GM12878 (cell line): ENCODE measurements at regions of chr20 and their contacts with region 1.

Region 1: GRCh38 chr20:53578492-53579222 is 15.0 kb downstream of the ZNF217 start:
- DNase-seq: peak; percentile 76
- ATAC-seq: peak; percentile 61
- H3K4me3 ChIP-seq: peak overlapping the region; percentile 79
- H3K27ac ChIP-seq: peak overlapping the region; percentile 69
- H3K4me1 ChIP-seq: peaks cover 9% of the 10 kb centered on the region
- H3K27me3 ChIP-seq: no peaks in the 10 kb centered on the region
- CTCF ChIP-seq: peak; percentile 65 to 82 (median 79)
- EP300 ChIP-seq: no peak
- POLR2A ChIP-seq: no peak
- RAD21 ChIP-seq: peak; percentile 91

Region 2: GRCh38 chr20:53623454-53624211 is 45.0 kb after region 1 on chr20:
- CTCF ChIA-PET with region 1: interaction called, 6 read pairs
- POLR2A ChIA-PET with region 1: no interaction called
- RAD21 ChIA-PET with region 1: interaction called, 7 read pairs
- SMC1A ChIA-PET with region 1: interaction called, 10 read pairs
- in situ Hi-C with region 1: no loop called
- intact Hi-C with region 1: no loop called
- DNase-seq: peak; percentile 60
- ATAC-seq: peak; percentile 81
- H3K4me3 ChIP-seq: peak overlapping the region; percentile 54
- H3K27ac ChIP-seq: peak overlapping the region; percentile 99
- H3K4me1 ChIP-seq: peaks cover 38% of the 10 kb centered on the region
- H3K27me3 ChIP-seq: no peaks in the 10 kb centered on the region
- CTCF ChIP-seq: 0 out of 6 replicates have a peak, but pooled peaks of 1 of the 3 experiments have one; percentile 8
- EP300 ChIP-seq: no peak
- POLR2A ChIP-seq: peak; percentile 61
- RAD21 ChIP-seq: 0 out of 2 replicates have a peak, but pooled peaks have one; percentile 10

Region 3: DNA sequence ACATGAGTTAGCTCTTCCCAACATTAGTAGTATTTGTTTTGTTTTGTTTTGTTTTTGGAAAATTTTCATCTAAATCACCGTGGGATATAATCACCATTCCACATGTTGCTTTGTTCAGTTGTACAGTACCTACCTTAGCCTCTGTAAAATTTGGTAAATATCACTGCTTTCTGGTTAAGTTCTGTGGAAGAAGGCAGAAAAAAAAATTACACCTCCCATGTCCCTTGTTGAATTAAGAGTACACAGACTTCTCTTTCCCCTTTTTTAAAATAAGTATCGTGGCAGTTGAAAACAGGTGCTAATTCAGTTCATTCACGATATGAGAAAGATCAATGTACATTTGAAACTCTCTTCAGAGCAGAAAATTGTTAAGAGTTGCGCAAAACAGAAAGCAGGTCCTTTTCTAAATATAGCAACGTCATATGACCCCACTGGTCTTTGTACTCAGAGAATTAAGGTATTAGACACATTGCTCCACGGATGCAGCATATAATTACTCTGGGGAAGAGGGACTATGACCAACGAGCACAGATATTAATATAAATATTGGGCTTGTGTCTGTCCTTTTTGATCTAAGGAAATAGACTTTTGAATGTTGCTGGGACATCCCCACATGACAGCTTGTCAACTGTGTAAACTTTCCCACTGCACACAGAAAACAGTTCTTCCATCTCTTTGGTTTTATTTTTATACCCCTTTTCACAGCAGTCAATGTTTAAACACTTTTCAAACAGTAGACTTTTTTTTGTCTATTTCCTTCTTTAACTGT is 73.6 kb after region 1 on chr20:
- CTCF ChIA-PET with region 1: no interaction called
- POLR2A ChIA-PET with region 1: interaction called, 3 read pairs
- RAD21 ChIA-PET with region 1: interaction called, 6 read pairs
- SMC1A ChIA-PET with region 1: interaction called, 8 read pairs
- in situ Hi-C with region 1: no loop called
- intact Hi-C with region 1: loop called (anchors 2 kb)
- DNase-seq: peak; percentile 93
- ATAC-seq: peak; percentile 76
- H3K4me3 ChIP-seq: peak overlapping the region; percentile 30; the same call in 1 of the 2 replicates
- H3K27ac ChIP-seq: peak overlapping the region; percentile 99
- H3K4me1 ChIP-seq: peaks cover 39% of the 10 kb centered on the region
- H3K27me3 ChIP-seq: no peaks in the 10 kb centered on the region
- CTCF ChIP-seq: no peak
- EP300 ChIP-seq: peak; percentile 68 to 72; a peak in 2 of 4 replicates
- POLR2A ChIP-seq: no peak
- RAD21 ChIP-seq: peak; percentile 17; the same call in 1 of the 2 replicates

Region 4: DNA sequence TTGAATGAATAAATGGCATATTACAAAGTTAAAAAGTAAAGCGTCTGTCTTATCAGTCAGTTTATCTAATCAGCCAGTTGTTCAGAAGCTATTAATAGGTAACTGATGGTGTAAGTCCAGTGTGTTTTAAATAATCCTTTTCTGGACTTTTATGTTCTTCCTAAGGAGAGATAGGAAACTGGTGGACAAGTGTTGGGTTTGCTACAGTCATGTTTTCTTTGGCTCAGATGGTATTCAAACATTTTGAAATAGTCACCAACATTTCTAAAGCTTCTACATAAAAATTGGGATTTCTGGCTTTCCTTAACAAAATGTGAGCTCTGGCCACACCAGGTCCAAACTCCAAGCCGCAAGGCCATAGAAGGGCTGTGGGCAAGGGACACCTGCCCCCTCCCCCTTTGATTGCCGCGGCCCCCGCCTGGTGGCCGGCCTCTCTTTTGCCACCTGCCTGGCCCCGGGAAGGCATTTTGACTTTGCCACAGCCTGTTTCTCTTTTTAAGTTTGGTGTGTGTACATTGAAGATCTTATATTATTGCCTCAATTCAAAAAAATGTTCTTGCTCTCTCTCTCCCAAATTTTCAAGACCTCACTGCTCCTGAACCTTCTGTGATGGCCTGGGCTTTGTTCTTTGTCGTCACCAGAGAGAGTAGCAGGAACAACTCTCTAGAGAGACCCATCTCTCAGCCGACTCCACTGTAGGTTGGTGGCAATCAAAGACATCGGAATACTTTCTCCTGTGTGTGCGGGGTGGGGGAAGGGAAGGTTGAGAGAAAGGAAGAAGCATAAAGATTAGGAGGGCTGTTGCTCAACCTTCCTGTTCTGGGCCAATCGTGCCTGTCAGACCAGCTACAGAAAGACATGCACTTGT is 99.0 kb after region 1 on chr20:
- CTCF ChIA-PET with region 1: no interaction called
- POLR2A ChIA-PET with region 1: no interaction called
- RAD21 ChIA-PET with region 1: no interaction called
- SMC1A ChIA-PET with region 1: no interaction called
- in situ Hi-C with region 1: no loop called
- intact Hi-C with region 1: no loop called
- DNase-seq: no peak
- ATAC-seq: no peak
- H3K4me3 ChIP-seq: no peak overlapping the region
- H3K27ac ChIP-seq: no peak overlapping the region
- H3K4me1 ChIP-seq: peaks cover 8% of the 10 kb centered on the region; the same call in 1 of the 2 replicates
- H3K27me3 ChIP-seq: no peaks in the 10 kb centered on the region
- CTCF ChIP-seq: no peak
- EP300 ChIP-seq: no peak
- POLR2A ChIP-seq: no peak
- RAD21 ChIP-seq: no peak

Region 5: GRCh38 chr20:53738039-53738944 is 159.6 kb after region 1 on chr20:
- CTCF ChIA-PET with region 1: interaction called, 3 read pairs
- POLR2A ChIA-PET with region 1: no interaction called
- RAD21 ChIA-PET with region 1: interaction called, 3 read pairs
- SMC1A ChIA-PET with region 1: interaction called, 16 read pairs
- in situ Hi-C with region 1: no loop called
- intact Hi-C with region 1: loop called (anchors 5 kb)
- DNase-seq: no peak
- ATAC-seq: no peak
- H3K4me3 ChIP-seq: 0 out of 2 replicates have a peak overlapping the region, but pooled peaks have one; percentile 69
- H3K27ac ChIP-seq: peak overlapping the region; percentile 86
- H3K4me1 ChIP-seq: peaks cover 56% of the 10 kb centered on the region
- H3K27me3 ChIP-seq: no peaks in the 10 kb centered on the region
- CTCF ChIP-seq: no peak
- EP300 ChIP-seq: no peak
- POLR2A ChIP-seq: no peak
- RAD21 ChIP-seq: no peak

Region 6: GRCh38 chr20:53839423-53840176 is 260.9 kb after region 1 on chr20:
- CTCF ChIA-PET with region 1: no interaction called
- POLR2A ChIA-PET with region 1: interaction called, 3 read pairs
- RAD21 ChIA-PET with region 1: interaction called, 3 read pairs
- SMC1A ChIA-PET with region 1: no interaction called
- in situ Hi-C with region 1: loop called (anchors 10 kb)
- intact Hi-C with region 1: loop called (anchors 2 kb)
- DNase-seq: peak; percentile 96
- ATAC-seq: peak; percentile 78
- H3K4me3 ChIP-seq: no peak overlapping the region
- H3K27ac ChIP-seq: peak overlapping the region; percentile 70
- H3K4me1 ChIP-seq: peaks cover 47% of the 10 kb centered on the region
- H3K27me3 ChIP-seq: no peaks in the 10 kb centered on the region
- CTCF ChIP-seq: no peak
- EP300 ChIP-seq: peak; percentile 39 to 54; a peak in 2 of 4 replicates
- POLR2A ChIP-seq: peak; percentile 53; the same call in 1 of the 2 replicates
- RAD21 ChIP-seq: 0 out of 2 replicates have a peak, but pooled peaks have one; percentile 3

Region 7: DNA sequence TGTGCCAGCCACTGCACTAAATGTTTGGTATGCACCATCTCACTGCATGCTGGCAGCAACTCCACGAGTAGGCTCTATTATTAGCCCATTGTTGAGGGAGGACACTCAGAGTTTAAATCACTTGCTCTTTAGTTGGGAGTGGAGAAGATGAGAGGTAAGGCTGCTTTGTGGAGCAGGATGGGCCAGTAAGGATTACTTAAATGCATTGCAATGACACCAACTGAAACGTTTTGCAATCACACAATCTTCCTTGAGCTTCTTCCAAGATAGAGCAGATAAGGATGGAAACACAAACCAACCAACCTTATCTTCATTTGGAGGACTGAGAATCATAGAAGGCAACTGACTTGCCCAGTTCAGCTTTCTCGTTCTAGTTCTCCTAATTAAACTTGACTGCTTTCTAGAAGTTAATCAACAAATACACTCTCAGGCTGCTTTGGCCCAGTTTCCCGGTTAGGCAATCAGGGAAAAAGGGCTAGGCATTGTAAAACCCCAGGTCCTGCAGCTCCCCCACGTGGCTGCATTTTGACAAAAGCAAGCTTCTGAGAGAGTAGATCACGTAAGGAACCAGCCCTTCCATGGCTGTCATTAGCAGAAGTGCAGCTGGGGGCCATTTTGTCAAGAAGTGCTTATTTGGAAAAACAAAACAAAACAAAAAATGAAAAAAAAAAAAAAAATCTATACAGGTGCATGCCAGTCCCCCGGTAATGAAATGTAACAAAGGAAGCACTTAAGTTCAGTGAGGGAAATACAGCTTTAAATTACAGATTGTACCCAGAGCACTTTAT is 361.1 kb after region 1 on chr20:
- CTCF ChIA-PET with region 1: interaction called, 31 read pairs
- POLR2A ChIA-PET with region 1: no interaction called
- RAD21 ChIA-PET with region 1: interaction called, 26 read pairs
- SMC1A ChIA-PET with region 1: interaction called, 30 read pairs
- in situ Hi-C with region 1: loop called (anchors 5 kb)
- intact Hi-C with region 1: loop called (anchors 2 kb)
- DNase-seq: peak; percentile 93
- ATAC-seq: peak; percentile 81
- H3K4me3 ChIP-seq: 0 out of 2 replicates have a peak overlapping the region, but pooled peaks have one; percentile 63
- H3K27ac ChIP-seq: peak overlapping the region; percentile 84
- H3K4me1 ChIP-seq: peaks cover 54% of the 10 kb centered on the region
- H3K27me3 ChIP-seq: no peaks in the 10 kb centered on the region
- CTCF ChIP-seq: peak; percentile 70 to 96 (median 83)
- EP300 ChIP-seq: 0 out of 4 replicates have a peak, but pooled peaks of 1 of the 2 experiments have one; percentile 10
- POLR2A ChIP-seq: no peak
- RAD21 ChIP-seq: peak; percentile 98

Region 8: GRCh38 chr20:54199721-54200176 is 621.1 kb after region 1 on chr20:
- CTCF ChIA-PET with region 1: no interaction called
- POLR2A ChIA-PET with region 1: no interaction called
- RAD21 ChIA-PET with region 1: no interaction called
- SMC1A ChIA-PET with region 1: no interaction called
- in situ Hi-C with region 1: loop called (anchors 10 kb)
- intact Hi-C with region 1: loop called (anchors 10 kb)
- DNase-seq: peak; percentile 39
- ATAC-seq: peak; percentile 71
- H3K4me3 ChIP-seq: no peak overlapping the region
- H3K27ac ChIP-seq: no peak overlapping the region
- H3K4me1 ChIP-seq: peaks cover 13% of the 10 kb centered on the region
- H3K27me3 ChIP-seq: no peaks in the 10 kb centered on the region
- CTCF ChIP-seq: peak; percentile 82 to 96 (median 94)
- EP300 ChIP-seq: no peak
- POLR2A ChIP-seq: no peak
- RAD21 ChIP-seq: peak; percentile 93